ENCODE measurements at regions of chr7 and their contacts with region 1.

Region 1: DNA sequence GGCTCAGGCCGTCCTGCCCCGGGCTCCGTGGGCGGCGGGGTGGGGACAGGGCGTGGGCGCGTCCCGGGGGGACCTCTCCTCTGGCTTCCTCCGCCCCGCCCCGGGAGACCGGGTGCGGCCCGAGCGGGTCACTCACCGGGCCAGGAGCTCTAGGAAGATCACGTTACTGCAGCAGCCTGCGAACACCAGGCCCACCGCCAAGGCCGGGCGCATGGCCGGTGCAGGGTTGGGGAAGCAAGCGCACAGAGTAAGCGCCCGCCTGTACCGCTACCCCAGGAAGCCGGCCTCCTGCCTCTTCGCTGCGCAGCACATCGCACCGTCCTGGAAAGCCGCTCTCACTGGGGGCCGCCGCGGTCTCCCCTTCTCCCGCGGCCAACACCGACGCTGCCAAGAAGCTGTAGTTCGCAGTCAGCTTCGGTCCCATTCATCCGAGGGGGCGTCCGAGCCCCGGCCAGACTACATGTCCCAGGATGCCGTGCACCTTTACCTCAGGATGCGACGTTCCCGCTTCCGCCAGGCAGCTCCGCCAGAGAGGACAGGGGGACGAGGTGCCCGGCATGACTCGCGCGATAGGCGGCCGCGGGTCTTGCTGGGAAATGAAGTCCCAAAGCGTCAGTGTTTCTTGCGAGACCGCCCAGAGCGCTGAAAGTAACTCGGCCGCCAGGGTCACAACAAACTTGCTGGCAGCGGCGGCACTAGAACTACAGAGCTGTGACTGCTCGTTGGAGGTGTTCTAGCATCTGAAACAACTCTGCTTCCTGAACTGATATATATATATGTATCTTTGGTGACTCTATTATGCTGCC is at the start of gene SLC35B4:
- DNase-seq: peak; percentile 98
- H3K4me3 ChIP-seq: peak within 1 kb of the TSS; percentile 65 to 86
- H3K27ac ChIP-seq: peak within 1 kb of the TSS; percentile 82 to 87
- H3K4me1 ChIP-seq: peaks cover 3% of the 10 kb centered on the region
- H3K27me3 ChIP-seq: no peaks in the 10 kb centered on the region
- CTCF ChIP-seq: peak in 3 of 4 experiments; percentile 5 to 57 (median 51)
- POLR2A ChIP-seq: no peak
- total RNA-seq, gene SLC35B4: 6.4 to 20.6 TPM

Region 2: DNA sequence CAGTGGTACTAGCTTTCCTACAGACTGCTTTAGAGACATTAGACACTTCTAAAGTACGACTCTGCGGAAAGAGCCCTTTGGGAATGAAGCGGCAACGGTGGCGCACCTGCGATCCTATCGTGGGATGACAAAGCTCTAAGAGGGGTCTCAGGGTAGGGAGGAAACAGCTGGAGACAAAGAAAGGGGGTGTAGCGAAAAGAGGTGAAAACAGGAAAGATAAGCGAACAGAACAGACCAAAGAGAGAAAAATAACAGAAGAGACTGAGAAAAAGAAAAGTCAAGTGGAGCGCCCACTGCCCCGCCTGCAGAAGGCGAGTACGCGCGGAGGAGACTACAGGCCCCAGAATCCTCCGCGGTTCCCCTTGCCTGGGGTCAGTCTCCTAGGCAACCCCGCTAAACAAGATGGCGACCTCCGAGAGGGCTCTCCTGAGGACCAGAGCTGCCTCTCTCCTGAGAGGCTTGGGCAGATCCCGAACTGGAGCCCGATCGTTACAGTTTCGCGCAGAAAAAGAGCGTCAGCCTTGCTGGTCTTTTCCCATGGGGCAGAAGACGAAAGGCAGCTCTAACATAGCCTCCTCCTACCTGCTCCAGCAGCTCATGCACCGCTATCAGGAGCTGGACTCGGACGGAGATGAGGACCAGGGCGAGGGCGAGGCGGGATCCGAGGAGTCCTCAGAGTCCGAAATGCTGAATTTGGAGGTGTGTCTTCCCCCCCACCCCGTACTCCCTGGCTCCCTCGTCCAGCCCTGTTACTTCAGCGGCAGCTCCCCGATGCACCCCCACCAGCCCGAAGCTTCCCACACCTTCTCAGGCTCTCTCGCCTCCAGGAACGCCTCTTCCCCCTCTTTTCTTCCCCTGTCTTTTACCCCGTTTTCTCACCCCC is 189.5 kb before region 1 on chr7 and contains the start of gene LRGUK:
- intact Hi-C with region 1: loop called (anchors 10 kb)
- DNase-seq: peak; percentile 80
- H3K4me3 ChIP-seq: peak within 1 kb of the TSS; percentile 46 to 48
- H3K27ac ChIP-seq: no peak within 1 kb of the TSS
- H3K4me1 ChIP-seq: no peaks in the 10 kb centered on the region
- H3K27me3 ChIP-seq: no peaks in the 10 kb centered on the region
- CTCF ChIP-seq: no peak
- POLR2A ChIP-seq: no peak
- total RNA-seq, gene LRGUK: 1.3 to 4.9 TPM

Region 3: GRCh38 chr7:134943764-134944400 is 627.1 kb after region 1 on chr7:
- intact Hi-C with region 1: no loop called
- DNase-seq: no peak
- H3K4me3 ChIP-seq: no peak overlapping the region
- H3K27ac ChIP-seq: no peak overlapping the region
- H3K4me1 ChIP-seq: no peaks in the 10 kb centered on the region
- H3K27me3 ChIP-seq: no peaks in the 10 kb centered on the region
- CTCF ChIP-seq: peak in 2 of 4 experiments; percentile 24 to 32
- POLR2A ChIP-seq: no peak

Region 4: GRCh38 chr7:135791543-135792362 is 1475.0 kb after region 1 on chr7:
- intact Hi-C with region 1: no loop called
- DNase-seq: no peak
- H3K4me3 ChIP-seq: no peak overlapping the region
- H3K27ac ChIP-seq: no peak overlapping the region
- H3K4me1 ChIP-seq: no peaks in the 10 kb centered on the region
- H3K27me3 ChIP-seq: no peaks in the 10 kb centered on the region
- CTCF ChIP-seq: no peak
- POLR2A ChIP-seq: no peak

Measured in prostate gland (tissue), 2 donors.